Heart left ventricle (tissue), 16 donors: ENCODE measurements at regions of chr16 and their contacts with region 1.

Region 1: GRCh38 chr16:28277537-28278388 is 14.6 kb upstream of the SBK1 start:
- DNase-seq: peak; percentile 78 to 93 (median 81)
- ATAC-seq: peak; percentile 71 to 92 (median 90)
- H3K4me3 ChIP-seq: peak overlapping the region in 10 of 12 donors; percentile 37 to 57 (median 42)
- H3K27ac ChIP-seq: peak overlapping the region in 1 of 12 donors; percentile 44
- H3K4me1 ChIP-seq: peaks cover 0 to 10% (median 5%) of the 10 kb centered on the region in 12 donors
- H3K27me3 ChIP-seq: peaks cover 0 to 20% (median 0%) of the 10 kb centered on the region in 9 donors
- CTCF ChIP-seq: peak; percentile 93 to 99 (median 97)
- POLR2A ChIP-seq: no peak

Region 2: GRCh38 chr16:27253526-27253930 is 1024.2 kb before region 1 on chr16:
- intact Hi-C with region 1: no loop called
- DNase-seq: no peak
- ATAC-seq: peak; percentile 60 to 76 (median 68)
- H3K4me3 ChIP-seq: no peak overlapping the region
- H3K27ac ChIP-seq: peak overlapping the region in 5 of 12 donors; percentile 4 to 61 (median 37)
- H3K4me1 ChIP-seq: peaks cover 0 to 24% (median 8%) of the 10 kb centered on the region in 12 donors
- H3K27me3 ChIP-seq: no peaks in the 10 kb centered on the region
- CTCF ChIP-seq: no peak
- POLR2A ChIP-seq: no peak

Region 3: DNA sequence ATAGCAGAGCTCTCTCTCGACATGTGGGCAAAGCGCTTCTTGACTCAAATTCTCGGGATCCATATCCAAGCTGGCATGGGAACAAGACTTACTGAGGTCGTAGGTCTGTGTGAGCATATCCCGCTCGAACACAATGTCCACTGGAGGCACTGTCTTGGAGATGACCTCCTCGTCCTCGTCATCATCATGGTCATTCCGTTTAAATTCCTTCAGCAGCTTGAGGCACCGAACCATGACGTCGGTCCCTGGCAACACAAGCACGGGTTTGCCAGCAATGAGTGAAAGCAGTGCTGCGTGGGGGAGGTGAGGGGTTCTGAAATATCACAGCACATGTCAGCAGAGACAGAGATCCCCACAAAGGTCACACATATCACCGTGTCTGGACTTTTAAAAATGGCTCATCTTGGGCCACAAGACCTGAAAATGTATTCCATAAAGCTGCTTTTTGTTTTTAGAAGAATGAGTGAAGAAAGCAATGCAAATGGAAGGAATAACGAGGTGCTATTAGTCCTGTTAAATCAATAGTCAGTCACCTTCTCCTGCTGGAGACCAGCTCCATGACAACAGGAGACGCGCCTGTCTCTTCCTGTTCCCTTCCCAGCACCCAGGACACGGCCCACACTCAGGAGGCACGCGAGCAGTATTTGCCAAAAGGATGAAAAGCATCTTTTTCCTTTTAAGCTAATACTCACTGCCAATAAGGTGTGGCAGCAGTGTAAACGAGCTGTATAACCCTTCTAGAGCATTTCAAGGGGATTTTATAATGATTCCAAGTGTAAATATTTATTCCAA is 765.9 kb before region 1 on chr16:
- intact Hi-C with region 1: no loop called
- DNase-seq: peak in 4 of 5 donors; percentile 67 to 94 (median 76)
- ATAC-seq: peak; percentile 53 to 84 (median 76)
- H3K4me3 ChIP-seq: no peak overlapping the region
- H3K27ac ChIP-seq: peak overlapping the region; percentile 8 to 89 (median 61)
- H3K4me1 ChIP-seq: peaks cover 0 to 37% (median 15%) of the 10 kb centered on the region in 12 donors
- H3K27me3 ChIP-seq: no peaks in the 10 kb centered on the region
- CTCF ChIP-seq: peak in 4 of 12 donors; percentile 16 to 33 (median 24)
- POLR2A ChIP-seq: no peak

Region 4: DNA sequence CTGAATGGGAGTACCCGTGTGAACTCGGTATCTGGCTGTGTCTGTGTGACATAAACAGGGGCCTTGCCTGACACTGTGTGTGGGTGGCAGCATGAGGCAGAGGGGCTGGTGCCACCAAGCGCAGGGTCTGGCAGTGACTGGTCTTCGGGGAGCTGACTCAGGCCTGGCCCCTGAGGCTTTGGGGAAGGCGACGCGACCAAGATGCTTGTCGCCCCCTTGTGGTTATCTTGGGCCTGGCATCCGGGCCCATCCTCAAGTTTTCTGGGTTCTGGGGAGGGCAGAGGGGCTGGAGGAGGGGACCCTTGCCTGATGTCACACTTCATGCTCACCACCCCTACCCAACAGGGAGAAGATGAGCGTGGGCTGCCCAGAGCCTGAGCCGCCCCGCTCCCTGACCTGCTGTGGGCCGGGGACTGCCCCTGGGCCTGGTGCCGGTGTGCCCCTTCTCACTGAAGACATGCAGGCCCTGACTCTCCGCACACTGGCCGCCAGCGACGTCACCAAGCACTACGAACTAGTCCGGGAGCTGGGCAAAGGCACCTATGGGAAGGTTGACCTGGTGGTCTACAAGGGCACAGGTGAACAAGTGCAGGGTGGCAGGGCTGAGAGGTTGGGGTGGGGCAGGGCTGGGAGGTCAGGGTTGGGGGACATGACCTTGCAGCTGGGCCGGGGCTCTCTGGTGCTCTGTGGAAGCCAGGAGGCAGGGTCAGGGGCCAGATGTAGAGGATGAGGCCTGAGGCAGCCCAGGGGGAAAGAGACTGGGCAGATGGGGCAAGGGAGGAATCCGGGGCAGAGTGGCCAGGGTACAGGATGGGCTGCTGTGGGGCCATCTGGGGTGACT is 39.5 kb after region 1 on chr16:
- intact Hi-C with region 1: loop called in 9 of 10 experiments (anchors 1 to 5 kb)
- DNase-seq: peak; percentile 28 to 79 (median 44)
- ATAC-seq: peak in 3 of 4 donors; percentile 40 to 54 (median 52)
- H3K4me3 ChIP-seq: no peak overlapping the region
- H3K27ac ChIP-seq: no peak overlapping the region
- H3K4me1 ChIP-seq: peaks cover 0 to 7% (median 0%) of the 10 kb centered on the region in 12 donors
- H3K27me3 ChIP-seq: no peaks in the 10 kb centered on the region
- CTCF ChIP-seq: peak; percentile 65 to 87 (median 80)
- POLR2A ChIP-seq: no peak

Region 5: DNA sequence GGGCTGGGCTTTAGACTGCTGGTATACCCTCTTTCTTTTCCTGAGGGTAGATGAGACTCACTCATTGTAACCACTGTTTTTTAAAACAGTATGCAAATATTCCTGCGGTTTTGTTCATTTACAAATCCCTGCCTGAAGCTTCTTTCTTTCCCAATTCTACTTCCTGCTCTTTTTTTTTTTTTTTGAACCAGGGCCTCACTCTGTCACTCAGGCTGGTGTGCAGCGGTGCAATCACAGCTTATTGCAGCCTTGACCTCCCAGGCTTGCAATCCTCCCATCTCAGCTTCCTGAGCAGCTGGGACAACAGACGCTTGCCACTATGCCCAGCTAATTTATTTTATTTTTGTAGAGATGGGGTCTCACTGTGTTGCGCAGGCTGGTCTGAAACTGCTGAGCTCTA is 340.1 kb after region 1 on chr16:
- intact Hi-C with region 1: loop called in 2 of 10 experiments (anchors 5 kb)
- DNase-seq: no peak
- ATAC-seq: no peak
- H3K4me3 ChIP-seq: no peak overlapping the region
- H3K27ac ChIP-seq: no peak overlapping the region
- H3K4me1 ChIP-seq: peaks cover 0 to 5% (median 0%) of the 10 kb centered on the region in 12 donors
- H3K27me3 ChIP-seq: no peaks in the 10 kb centered on the region
- CTCF ChIP-seq: no peak
- POLR2A ChIP-seq: no peak

Region 6: GRCh38 chr16:28623172-28623711 is 345.5 kb after region 1 on chr16:
- intact Hi-C with region 1: loop called in 2 of 10 experiments (anchors 5 kb)
- DNase-seq: peak in 3 of 5 donors; percentile 49 to 76 (median 51)
- ATAC-seq: peak; percentile 42 to 91 (median 84)
- H3K4me3 ChIP-seq: peak overlapping the region; percentile 19 to 64 (median 52)
- H3K27ac ChIP-seq: peak overlapping the region in 10 of 12 donors; percentile 32 to 68 (median 48)
- H3K4me1 ChIP-seq: peaks cover 0 to 12% (median 0%) of the 10 kb centered on the region in 12 donors
- H3K27me3 ChIP-seq: peaks cover 0 to 6% (median 0%) of the 10 kb centered on the region in 9 donors
- CTCF ChIP-seq: no peak
- POLR2A ChIP-seq: no peak